Endothelial cell of umbilical vein (primary cell): ENCODE measurements at regions of chr16 and their contacts with region 1.

Region 1: GRCh38 chr16:73058221-73058615 is 10.3 kb upstream of the ZFHX3 start:
- DNase-seq: peak; percentile 45
- H3K4me3 ChIP-seq: peak overlapping the region; percentile 35 to 94 (median 49)
- H3K27ac ChIP-seq: peak overlapping the region; percentile 65
- H3K4me1 ChIP-seq: peaks cover 61% of the 10 kb centered on the region
- H3K27me3 ChIP-seq: no peaks in the 10 kb centered on the region
- CTCF ChIP-seq: no peak
- POLR2A ChIP-seq: no peak

Region 2: DNA sequence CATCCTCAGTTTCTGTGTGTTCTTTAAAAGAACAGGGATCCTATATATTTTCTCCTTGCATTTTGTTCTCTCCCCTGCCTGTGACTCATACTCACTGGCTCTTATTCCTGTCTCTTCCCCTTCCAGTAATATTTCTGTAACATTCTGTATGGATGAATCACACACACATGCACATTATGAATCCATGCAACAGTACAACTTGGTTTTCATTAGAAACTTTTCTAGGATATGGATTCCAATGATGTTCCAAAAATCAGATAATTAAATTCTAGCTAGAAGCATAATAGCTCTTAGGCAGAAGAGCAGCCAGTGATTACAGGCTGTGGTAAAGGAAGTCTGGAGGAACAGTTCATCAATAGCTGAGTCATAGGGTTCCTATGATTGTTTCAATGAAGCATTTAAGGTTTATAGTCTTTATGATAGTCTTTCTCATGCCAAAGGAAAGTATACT is 766.7 kb before region 1 on chr16:
- CTCF ChIA-PET with region 1: interaction called, 3 read pairs
- POLR2A ChIA-PET with region 1: no interaction called
- dilution Hi-C with region 1: no loop called
- intact Hi-C with region 1: loop called (anchors 10 kb)
- DNase-seq: peak; percentile 87
- H3K4me3 ChIP-seq: peak overlapping the region in 1 of 3 experiments; percentile 44
- H3K27ac ChIP-seq: peak overlapping the region; percentile 97
- H3K4me1 ChIP-seq: peaks cover 32% of the 10 kb centered on the region
- H3K27me3 ChIP-seq: no peaks in the 10 kb centered on the region
- CTCF ChIP-seq: no peak
- POLR2A ChIP-seq: peak; percentile 45

Region 3: GRCh38 chr16:72847187-72848027 is 210.8 kb before region 1 on chr16:
- CTCF ChIA-PET with region 1: interaction called, 5 read pairs
- POLR2A ChIA-PET with region 1: no interaction called
- dilution Hi-C with region 1: no loop called
- intact Hi-C with region 1: loop called (anchors 5 kb)
- DNase-seq: peak; percentile 32
- H3K4me3 ChIP-seq: no peak overlapping the region
- H3K27ac ChIP-seq: peak overlapping the region; percentile 90
- H3K4me1 ChIP-seq: peaks cover 22% of the 10 kb centered on the region
- H3K27me3 ChIP-seq: no peaks in the 10 kb centered on the region
- CTCF ChIP-seq: peak; percentile 25 to 50
- POLR2A ChIP-seq: no peak

Region 4: DNA sequence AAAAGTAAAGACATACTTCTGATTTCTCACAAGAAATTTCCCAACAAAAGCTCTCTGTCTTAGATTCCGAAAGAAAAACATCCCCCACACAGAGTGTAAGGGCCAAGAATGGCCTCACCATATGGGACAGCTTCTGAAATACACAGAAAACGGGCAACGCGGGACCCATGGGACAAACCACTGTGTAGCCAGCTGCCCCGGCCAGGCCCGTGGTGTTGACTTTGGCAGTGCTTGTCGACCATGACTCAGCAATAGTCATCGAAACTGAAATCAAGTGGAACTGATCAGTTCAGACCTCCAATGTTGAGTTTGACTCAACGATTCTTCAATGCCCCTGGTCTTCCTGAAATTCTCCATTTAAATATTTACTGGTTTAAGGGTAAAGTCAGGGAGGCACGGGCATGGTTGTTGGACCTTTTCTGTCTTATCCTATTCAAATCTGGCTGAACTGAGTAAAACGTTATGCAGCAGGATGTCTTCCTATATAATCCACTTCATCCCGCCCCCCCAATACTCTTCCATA is 37.8 kb before region 1 on chr16:
- CTCF ChIA-PET with region 1: interaction called, 3 read pairs
- POLR2A ChIA-PET with region 1: no interaction called
- dilution Hi-C with region 1: no loop called
- intact Hi-C with region 1: loop called (anchors 2 kb)
- DNase-seq: peak; percentile 89
- H3K4me3 ChIP-seq: no peak overlapping the region
- H3K27ac ChIP-seq: peak overlapping the region; percentile 78
- H3K4me1 ChIP-seq: peaks cover 30% of the 10 kb centered on the region
- H3K27me3 ChIP-seq: no peaks in the 10 kb centered on the region
- CTCF ChIP-seq: no peak
- POLR2A ChIP-seq: peak; percentile 6

Region 5: DNA sequence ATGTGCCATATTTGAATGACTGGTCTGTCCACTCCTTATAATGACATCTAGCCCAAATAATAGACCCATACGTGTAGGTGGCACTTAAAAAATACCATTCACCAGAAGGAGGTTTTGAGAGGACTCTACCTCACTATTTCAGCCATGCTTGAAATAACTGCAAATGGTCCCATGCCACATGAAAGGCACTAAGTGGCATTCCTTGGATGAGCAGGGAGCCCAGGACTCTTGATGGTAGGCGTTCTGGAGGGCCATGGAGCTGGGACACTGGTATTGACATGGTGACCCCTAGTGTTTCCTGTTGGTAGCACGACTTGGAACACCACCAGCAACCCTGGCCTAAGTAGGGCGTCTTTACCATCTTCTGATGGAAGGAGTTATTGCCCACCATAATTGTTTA is 138.5 kb after region 1 on chr16:
- CTCF ChIA-PET with region 1: interaction called, 4 read pairs
- POLR2A ChIA-PET with region 1: no interaction called
- dilution Hi-C with region 1: no loop called
- intact Hi-C with region 1: loop called (anchors 1 kb)
- DNase-seq: peak; percentile 78
- H3K4me3 ChIP-seq: no peak overlapping the region
- H3K27ac ChIP-seq: no peak overlapping the region
- H3K4me1 ChIP-seq: no peaks in the 10 kb centered on the region
- H3K27me3 ChIP-seq: peaks cover 5 to 10% of the 10 kb centered on the region in 2 experiments
- CTCF ChIP-seq: peak; percentile 56 to 60
- POLR2A ChIP-seq: no peak

Region 6: GRCh38 chr16:73354434-73354833 is 296.2 kb after region 1 on chr16:
- CTCF ChIA-PET with region 1: no interaction called
- POLR2A ChIA-PET with region 1: no interaction called
- dilution Hi-C with region 1: no loop called
- intact Hi-C with region 1: no loop called
- DNase-seq: no peak
- H3K4me3 ChIP-seq: no peak overlapping the region
- H3K27ac ChIP-seq: no peak overlapping the region
- H3K4me1 ChIP-seq: no peaks in the 10 kb centered on the region
- H3K27me3 ChIP-seq: no peaks in the 10 kb centered on the region
- CTCF ChIP-seq: no peak
- POLR2A ChIP-seq: no peak